ENCODE measurements at regions of chr18 and their contacts with region 1.

Region 1: GRCh38 chr18:48161191-48161910 is 230.9 kb upstream of the SMAD2 start:
- DNase-seq: peak; percentile 46
- H3K4me3 Mint-ChIP-seq: peak overlapping the region; percentile 61
- H3K27ac Mint-ChIP-seq: no peak overlapping the region
- H3K4me1 Mint-ChIP-seq: peaks cover 1% of the 10 kb centered on the region
- H3K27me3 Mint-ChIP-seq: peaks cover 59% of the 10 kb centered on the region

Region 2: DNA sequence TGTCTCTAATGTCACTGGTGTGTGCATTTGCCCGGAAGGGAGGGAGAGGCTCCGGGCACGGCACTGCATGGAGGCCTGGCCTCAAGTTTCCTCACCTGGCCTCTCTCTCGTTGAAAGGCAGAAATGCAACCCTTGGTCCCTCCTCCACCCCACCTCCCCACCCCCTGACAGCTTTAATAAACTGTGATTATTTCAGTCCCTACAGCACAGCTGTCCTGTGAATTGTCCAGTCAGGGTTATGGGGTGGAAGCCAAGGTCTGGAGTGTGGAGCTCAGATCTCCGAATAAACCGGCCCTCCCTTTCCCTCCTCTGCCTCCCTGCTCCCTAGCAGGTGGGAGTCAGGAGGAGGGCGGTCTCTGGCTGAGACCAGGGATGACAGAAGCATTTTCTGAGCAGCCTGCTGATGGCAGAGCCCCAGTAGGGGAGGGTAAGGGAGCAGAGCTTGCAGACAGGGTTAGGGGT is 31.7 kb before region 1 on chr18:
- intact Hi-C with region 1: no loop called
- DNase-seq: no peak
- H3K4me3 Mint-ChIP-seq: no peak overlapping the region
- H3K27ac Mint-ChIP-seq: no peak overlapping the region
- H3K4me1 Mint-ChIP-seq: peaks cover 25% of the 10 kb centered on the region
- H3K27me3 Mint-ChIP-seq: peaks cover 76% of the 10 kb centered on the region

Region 3: GRCh38 chr18:48222118-48222517 is 60.8 kb after region 1 on chr18:
- intact Hi-C with region 1: loop called (anchors 10 kb)
- DNase-seq: no peak
- H3K4me3 Mint-ChIP-seq: no peak overlapping the region
- H3K27ac Mint-ChIP-seq: no peak overlapping the region
- H3K4me1 Mint-ChIP-seq: peaks cover 1% of the 10 kb centered on the region
- H3K27me3 Mint-ChIP-seq: peaks cover 3% of the 10 kb centered on the region

Region 4: GRCh38 chr18:48356811-48357631 is 195.7 kb after region 1 on chr18:
- intact Hi-C with region 1: no loop called
- DNase-seq: no peak
- H3K4me3 Mint-ChIP-seq: no peak overlapping the region
- H3K27ac Mint-ChIP-seq: no peak overlapping the region
- H3K4me1 Mint-ChIP-seq: no peaks in the 10 kb centered on the region
- H3K27me3 Mint-ChIP-seq: no peaks in the 10 kb centered on the region

Measured in activated T-helper 2 cell treated with anti-CD3 and anti-CD28 coated beads, Interferon-gamma antibody, Interleukin-2, Interleukin-4, amounts not matched to agents 10 μg/mL and 5 μg/mL and 100 μg/mL, durations not matched to agents 14 hours and 24 hours and 36 hours (primary cell).